ENCODE measurements at regions of chr1 and their contacts with region 1.

Region 1: GRCh38 chr1:158203693-158204457 is 23.2 kb downstream of the CD1D start:
- DNase-seq: peak; percentile 70
- H3K4me3 ChIP-seq: no peak overlapping the region
- H3K27ac ChIP-seq: no peak overlapping the region
- H3K4me1 ChIP-seq: peaks cover 5% of the 10 kb centered on the region
- H3K27me3 ChIP-seq: peaks cover 0 to 16% of the 10 kb centered on the region in 2 experiments
- CTCF ChIP-seq: peak; percentile 59 to 63
- POLR2A ChIP-seq: no peak

Region 2: DNA sequence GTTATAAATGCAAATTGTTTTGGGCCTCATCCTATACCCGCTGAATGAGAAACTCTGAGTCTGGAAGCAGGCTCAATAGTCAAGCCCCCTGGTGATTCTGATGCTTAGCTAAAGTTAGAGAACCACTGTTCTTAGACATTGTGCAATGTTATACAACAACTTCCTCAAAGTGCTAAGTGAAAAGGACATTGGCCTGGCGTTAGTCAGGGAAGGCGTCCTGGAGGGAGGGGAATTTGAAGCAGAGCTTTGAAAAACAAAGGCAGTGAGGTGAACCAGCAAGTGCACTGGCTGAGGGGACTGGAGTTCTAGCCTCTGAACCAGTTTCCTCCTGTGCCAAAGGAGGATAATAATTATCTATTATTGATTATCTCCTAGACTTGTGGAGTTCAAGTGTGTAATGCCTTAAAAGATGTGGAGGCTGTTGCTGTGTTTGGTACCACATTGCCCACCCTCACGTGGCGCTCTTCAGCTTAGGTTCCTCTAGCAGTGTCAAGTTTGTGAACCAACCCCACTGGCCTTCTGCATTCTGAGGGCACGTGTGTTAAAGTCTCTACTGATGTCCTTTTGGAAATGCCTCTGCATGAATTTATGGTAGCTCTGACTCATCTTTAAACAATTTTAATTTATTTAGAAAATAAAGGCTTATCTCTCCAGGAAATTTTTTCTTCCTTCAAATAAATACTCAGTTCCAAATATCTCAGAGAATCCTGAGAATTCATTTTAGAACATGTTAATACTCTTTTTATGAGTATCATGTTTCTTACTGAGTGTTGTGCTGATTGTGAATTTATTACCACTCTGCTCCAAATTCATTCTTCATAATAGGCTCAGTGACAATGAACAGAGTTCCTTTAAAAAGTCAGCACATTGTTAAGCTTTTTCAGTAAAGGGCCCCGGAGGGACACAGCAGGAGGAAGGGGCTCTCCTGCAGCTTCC is 17.8 kb before region 1 on chr1:
- CTCF ChIA-PET with region 1: interaction called, 24 read pairs
- POLR2A ChIA-PET with region 1: no interaction called
- dilution Hi-C with region 1: no loop called
- intact Hi-C with region 1: no loop called
- DNase-seq: no peak
- H3K4me3 ChIP-seq: no peak overlapping the region
- H3K27ac ChIP-seq: no peak overlapping the region
- H3K4me1 ChIP-seq: no peaks in the 10 kb centered on the region
- H3K27me3 ChIP-seq: peaks cover 14 to 25% of the 10 kb centered on the region in 2 experiments
- CTCF ChIP-seq: no peak
- POLR2A ChIP-seq: no peak

Region 3: GRCh38 chr1:158227904-158228623 is 24.2 kb after region 1 on chr1:
- CTCF ChIA-PET with region 1: no interaction called
- POLR2A ChIA-PET with region 1: no interaction called
- dilution Hi-C with region 1: no loop called
- intact Hi-C with region 1: no loop called
- DNase-seq: no peak
- H3K4me3 ChIP-seq: no peak overlapping the region
- H3K27ac ChIP-seq: no peak overlapping the region
- H3K4me1 ChIP-seq: no peaks in the 10 kb centered on the region
- H3K27me3 ChIP-seq: no peaks in the 10 kb centered on the region
- CTCF ChIP-seq: no peak
- POLR2A ChIP-seq: no peak

Region 4: GRCh38 chr1:158496374-158496773 is 292.5 kb after region 1 on chr1:
- CTCF ChIA-PET with region 1: interaction called, 49 read pairs
- POLR2A ChIA-PET with region 1: no interaction called
- dilution Hi-C with region 1: no loop called
- intact Hi-C with region 1: no loop called
- DNase-seq: peak; percentile 21
- H3K4me3 ChIP-seq: no peak overlapping the region
- H3K27ac ChIP-seq: no peak overlapping the region
- H3K4me1 ChIP-seq: no peaks in the 10 kb centered on the region
- H3K27me3 ChIP-seq: no peaks in the 10 kb centered on the region
- CTCF ChIP-seq: no peak
- POLR2A ChIP-seq: no peak

Region 5: DNA sequence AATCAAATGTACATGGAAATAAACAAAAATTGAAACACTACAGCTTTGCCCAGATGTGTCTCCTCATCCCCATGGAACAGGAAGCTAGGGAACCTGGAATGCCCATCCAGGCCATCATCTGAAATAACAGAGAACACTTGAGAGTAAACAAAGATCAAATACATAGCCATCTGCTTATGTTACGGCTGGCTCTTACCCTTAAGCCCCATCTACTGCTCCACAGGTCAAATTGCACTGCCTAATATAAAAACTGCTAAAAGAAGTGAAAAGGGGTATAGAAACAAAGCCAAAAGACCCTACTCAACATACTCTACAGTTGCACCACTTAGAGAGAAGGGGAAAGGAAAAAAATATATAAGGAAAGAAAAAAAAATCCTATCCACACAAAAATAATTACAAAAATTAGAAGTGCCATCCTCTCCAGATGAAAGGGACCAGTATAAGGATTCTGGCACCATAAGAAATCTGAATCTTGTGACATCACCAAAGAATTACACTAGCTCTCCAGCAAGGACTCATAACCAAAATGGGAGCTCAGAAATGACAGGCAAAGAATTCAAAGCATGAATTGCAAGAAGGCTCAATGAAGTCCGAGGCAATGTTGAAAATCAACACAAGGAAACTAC is 323.4 kb after region 1 on chr1:
- CTCF ChIA-PET with region 1: interaction called, 47 read pairs
- POLR2A ChIA-PET with region 1: no interaction called
- dilution Hi-C with region 1: no loop called
- intact Hi-C with region 1: no loop called
- DNase-seq: peak; percentile 24
- H3K4me3 ChIP-seq: no peak overlapping the region
- H3K27ac ChIP-seq: no peak overlapping the region
- H3K4me1 ChIP-seq: no peaks in the 10 kb centered on the region
- H3K27me3 ChIP-seq: no peaks in the 10 kb centered on the region
- CTCF ChIP-seq: peak in 1 of 2 donors; percentile 37
- POLR2A ChIP-seq: no peak

Region 6: GRCh38 chr1:158563853-158564252 is 360.0 kb after region 1 on chr1:
- CTCF ChIA-PET with region 1: no interaction called
- POLR2A ChIA-PET with region 1: no interaction called
- dilution Hi-C with region 1: no loop called
- intact Hi-C with region 1: no loop called
- DNase-seq: no peak
- H3K4me3 ChIP-seq: no peak overlapping the region
- H3K27ac ChIP-seq: no peak overlapping the region
- H3K4me1 ChIP-seq: no peaks in the 10 kb centered on the region
- H3K27me3 ChIP-seq: no peaks in the 10 kb centered on the region
- CTCF ChIP-seq: no peak
- POLR2A ChIP-seq: no peak

Region 7: DNA sequence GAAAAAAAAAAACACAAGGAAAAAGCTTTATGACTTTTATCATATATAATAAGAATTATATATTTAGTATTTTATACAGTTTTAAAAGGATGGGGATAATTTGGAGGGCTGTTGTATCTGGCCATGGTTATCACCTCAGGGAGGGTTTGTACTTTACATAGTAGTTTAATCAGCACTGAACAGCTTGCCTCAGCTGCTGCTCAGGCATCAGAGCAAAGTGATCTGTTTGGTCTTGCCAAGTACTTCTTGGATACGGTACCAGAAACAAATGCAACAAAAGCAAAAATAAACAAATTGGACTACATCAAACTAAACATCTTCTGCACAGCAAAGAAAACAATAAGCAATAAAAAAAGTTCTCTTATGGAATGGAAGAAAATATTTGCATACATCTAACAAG is 485.2 kb after region 1 on chr1:
- CTCF ChIA-PET with region 1: no interaction called
- POLR2A ChIA-PET with region 1: no interaction called
- dilution Hi-C with region 1: no loop called
- intact Hi-C with region 1: no loop called
- DNase-seq: no peak
- H3K4me3 ChIP-seq: no peak overlapping the region
- H3K27ac ChIP-seq: no peak overlapping the region
- H3K4me1 ChIP-seq: no peaks in the 10 kb centered on the region
- H3K27me3 ChIP-seq: no peaks in the 10 kb centered on the region
- CTCF ChIP-seq: no peak
- POLR2A ChIP-seq: no peak

Region 8: DNA sequence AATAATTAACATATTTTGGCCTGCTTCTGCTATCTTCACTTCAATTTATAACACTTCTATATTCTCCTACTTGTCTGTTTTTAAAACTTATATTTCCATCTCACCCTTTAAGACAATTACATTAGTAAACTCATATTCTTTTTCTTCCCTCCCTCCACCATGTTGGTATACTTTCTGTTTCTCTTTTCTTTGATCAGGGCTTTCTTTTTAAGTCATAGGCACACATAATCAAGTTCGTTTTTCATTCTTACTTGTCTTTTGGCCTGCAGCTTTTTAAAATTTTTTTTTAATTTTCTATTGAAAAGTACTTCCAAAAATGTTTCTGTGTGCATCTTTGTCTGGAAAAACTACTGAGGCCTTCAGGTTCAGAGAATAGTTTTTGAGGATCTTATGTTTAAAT is 729.7 kb after region 1 on chr1:
- CTCF ChIA-PET with region 1: no interaction called
- POLR2A ChIA-PET with region 1: no interaction called
- dilution Hi-C with region 1: no loop called
- intact Hi-C with region 1: no loop called
- DNase-seq: no peak
- H3K4me3 ChIP-seq: no peak overlapping the region
- H3K27ac ChIP-seq: no peak overlapping the region
- H3K4me1 ChIP-seq: no peaks in the 10 kb centered on the region
- H3K27me3 ChIP-seq: no peaks in the 10 kb centered on the region
- CTCF ChIP-seq: no peak
- POLR2A ChIP-seq: no peak